ENCODE measurements at regions of chr17 and their contacts with region 1.

Region 1: DNA sequence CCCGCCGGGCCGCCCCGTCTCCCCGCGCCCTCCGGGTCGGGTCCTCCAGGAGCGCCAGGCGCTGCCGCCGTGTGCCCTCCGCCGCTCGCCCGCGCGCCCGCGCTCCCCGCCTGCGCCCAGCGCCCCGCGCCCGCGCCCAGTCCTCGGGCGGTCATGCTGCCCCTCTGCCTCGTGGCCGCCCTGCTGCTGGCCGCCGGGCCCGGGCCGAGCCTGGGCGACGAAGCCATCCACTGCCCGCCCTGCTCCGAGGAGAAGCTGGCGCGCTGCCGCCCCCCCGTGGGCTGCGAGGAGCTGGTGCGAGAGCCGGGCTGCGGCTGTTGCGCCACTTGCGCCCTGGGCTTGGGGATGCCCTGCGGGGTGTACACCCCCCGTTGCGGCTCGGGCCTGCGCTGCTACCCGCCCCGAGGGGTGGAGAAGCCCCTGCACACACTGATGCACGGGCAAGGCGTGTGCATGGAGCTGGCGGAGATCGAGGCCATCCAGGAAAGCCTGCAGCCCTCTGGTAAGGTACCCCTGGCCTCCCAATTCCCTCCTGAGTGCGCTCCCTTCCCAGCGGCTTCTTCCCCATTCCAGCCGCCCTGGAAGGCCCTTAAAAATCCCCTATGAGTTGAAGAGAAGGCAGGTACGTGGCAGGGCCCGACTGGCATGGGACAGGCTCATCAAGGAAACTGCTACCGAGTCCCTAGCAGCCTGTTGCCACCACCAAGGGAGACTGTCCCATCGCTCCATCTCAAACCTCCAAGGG is 505 bp downstream of the IGFBP4 start:
- DNase-seq: peak; percentile 34 to 83 (median 67)
- ATAC-seq: peak; percentile 76
- H3K4me3 ChIP-seq: peak overlapping the region; percentile 42 to 49
- H3K4me3 Mint-ChIP-seq: peak overlapping the region; percentile 85
- H3K27ac ChIP-seq: no peak overlapping the region
- H3K27ac Mint-ChIP-seq: peak overlapping the region; percentile 66
- H3K4me1 ChIP-seq: peaks cover 22% of the 10 kb centered on the region
- H3K4me1 Mint-ChIP-seq: peaks cover 29% of the 10 kb centered on the region
- H3K27me3 ChIP-seq: no peaks in the 10 kb centered on the region
- H3K27me3 Mint-ChIP-seq: peaks cover 3% of the 10 kb centered on the region
- CTCF ChIP-seq: peak; percentile 30

Region 2: DNA sequence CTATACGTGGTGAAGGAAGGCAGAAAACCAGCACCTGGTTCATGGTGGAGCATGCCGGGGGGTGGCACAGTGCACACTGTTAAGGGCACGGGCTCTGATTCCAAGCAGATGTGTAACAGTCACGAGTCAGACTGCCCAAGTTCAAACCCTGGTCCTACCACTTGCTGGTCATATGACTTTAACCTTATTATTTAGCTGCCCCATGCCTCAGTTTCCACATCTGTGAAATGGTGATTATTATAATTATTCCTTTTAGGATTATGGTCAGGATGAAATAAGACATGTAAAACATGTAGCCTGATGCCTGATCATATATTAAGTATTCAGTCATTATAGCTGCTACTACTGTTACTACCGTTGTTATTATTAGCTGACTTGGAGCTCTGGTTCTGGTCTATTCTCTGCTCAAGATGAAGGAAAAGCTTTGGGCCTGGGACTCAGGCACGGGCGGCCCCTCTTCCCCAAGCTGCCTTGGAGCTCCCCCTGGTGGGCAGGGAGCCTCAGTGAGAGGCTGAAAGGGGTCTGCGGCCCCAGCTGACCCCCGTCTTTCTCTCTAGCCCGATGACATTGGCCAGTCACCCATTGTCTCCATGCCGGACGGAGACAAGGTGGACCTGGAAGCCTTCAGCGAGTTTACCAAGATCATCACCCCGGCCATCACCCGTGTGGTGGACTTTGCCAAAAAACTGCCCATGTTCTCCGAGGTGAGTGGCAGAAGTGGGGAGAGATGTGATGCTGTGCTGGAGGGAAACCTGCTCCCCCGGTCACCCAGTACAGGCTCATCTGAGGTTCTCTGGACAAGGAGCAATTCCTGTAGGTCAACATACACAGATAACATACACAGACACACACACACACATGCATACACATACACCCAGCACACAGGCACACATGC is 357.4 kb before region 1 on chr17:
- CTCF ChIA-PET with region 1: no interaction called
- POLR2A ChIA-PET with region 1: no interaction called
- intact Hi-C with region 1: no loop called
- DNase-seq: peak in 8 of 9 experiments; percentile 50 to 77 (median 70)
- ATAC-seq: peak; percentile 70
- H3K4me3 ChIP-seq: no peak overlapping the region
- H3K4me3 Mint-ChIP-seq: no peak overlapping the region
- H3K27ac ChIP-seq: no peak overlapping the region
- H3K27ac Mint-ChIP-seq: no peak overlapping the region
- H3K4me1 ChIP-seq: peaks cover 9% of the 10 kb centered on the region
- H3K4me1 Mint-ChIP-seq: peaks cover 9% of the 10 kb centered on the region
- H3K27me3 ChIP-seq: no peaks in the 10 kb centered on the region
- H3K27me3 Mint-ChIP-seq: no peaks in the 10 kb centered on the region
- CTCF ChIP-seq: peak; percentile 80

Region 3: GRCh38 chr17:40399185-40399584 is 44.6 kb before region 1 on chr17:
- CTCF ChIA-PET with region 1: interaction called, 9 read pairs
- POLR2A ChIA-PET with region 1: no interaction called
- intact Hi-C with region 1: loop called (anchors 1 to 2 kb)
- DNase-seq: peak in 2 of 9 experiments; percentile 71 to 78
- ATAC-seq: peak; percentile 55
- H3K4me3 ChIP-seq: no peak overlapping the region
- H3K4me3 Mint-ChIP-seq: no peak overlapping the region
- H3K27ac ChIP-seq: no peak overlapping the region
- H3K27ac Mint-ChIP-seq: no peak overlapping the region
- H3K4me1 ChIP-seq: no peaks in the 10 kb centered on the region
- H3K4me1 Mint-ChIP-seq: peaks cover 16% of the 10 kb centered on the region
- H3K27me3 ChIP-seq: no peaks in the 10 kb centered on the region
- H3K27me3 Mint-ChIP-seq: no peaks in the 10 kb centered on the region
- CTCF ChIP-seq: peak; percentile 74

Region 4: GRCh38 chr17:40407460-40407859 is 36.3 kb before region 1 on chr17:
- CTCF ChIA-PET with region 1: interaction called, 5 read pairs
- POLR2A ChIA-PET with region 1: no interaction called
- intact Hi-C with region 1: loop called in 1 of 2 experiments (anchors 2 kb)
- DNase-seq: no peak
- ATAC-seq: no peak
- H3K4me3 ChIP-seq: no peak overlapping the region
- H3K4me3 Mint-ChIP-seq: no peak overlapping the region
- H3K27ac ChIP-seq: no peak overlapping the region
- H3K27ac Mint-ChIP-seq: no peak overlapping the region
- H3K4me1 ChIP-seq: no peaks in the 10 kb centered on the region
- H3K4me1 Mint-ChIP-seq: peaks cover 11% of the 10 kb centered on the region
- H3K27me3 ChIP-seq: no peaks in the 10 kb centered on the region
- H3K27me3 Mint-ChIP-seq: no peaks in the 10 kb centered on the region
- CTCF ChIP-seq: no peak

Region 5: GRCh38 chr17:40427002-40427491 is 16.7 kb before region 1 on chr17:
- CTCF ChIA-PET with region 1: interaction called, 10 read pairs
- POLR2A ChIA-PET with region 1: no interaction called
- intact Hi-C with region 1: no loop called
- DNase-seq: peak in 4 of 9 experiments; percentile 14 to 57 (median 44)
- ATAC-seq: peak; percentile 85
- H3K4me3 ChIP-seq: peak overlapping the region in 1 of 2 experiments; percentile 24
- H3K4me3 Mint-ChIP-seq: peak overlapping the region; percentile 31
- H3K27ac ChIP-seq: no peak overlapping the region
- H3K27ac Mint-ChIP-seq: peak overlapping the region; percentile 7
- H3K4me1 ChIP-seq: peaks cover 30% of the 10 kb centered on the region
- H3K4me1 Mint-ChIP-seq: peaks cover 29% of the 10 kb centered on the region
- H3K27me3 ChIP-seq: no peaks in the 10 kb centered on the region
- H3K27me3 Mint-ChIP-seq: no peaks in the 10 kb centered on the region
- CTCF ChIP-seq: no peak

Region 6: GRCh38 chr17:40516581-40517285 is 73.0 kb after region 1 on chr17:
- CTCF ChIA-PET with region 1: interaction called, 5 read pairs
- POLR2A ChIA-PET with region 1: no interaction called
- intact Hi-C with region 1: loop called in 1 of 2 experiments (anchors 5 kb)
- DNase-seq: peak in 8 of 9 experiments; percentile 55 to 93 (median 77)
- ATAC-seq: peak; percentile 69
- H3K4me3 ChIP-seq: peak overlapping the region; percentile 45 to 56
- H3K4me3 Mint-ChIP-seq: peak overlapping the region; percentile 83
- H3K27ac ChIP-seq: peak overlapping the region; percentile 18 to 22
- H3K27ac Mint-ChIP-seq: peak overlapping the region; percentile 95
- H3K4me1 ChIP-seq: peaks cover 46% of the 10 kb centered on the region
- H3K4me1 Mint-ChIP-seq: peaks cover 57% of the 10 kb centered on the region
- H3K27me3 ChIP-seq: no peaks in the 10 kb centered on the region
- H3K27me3 Mint-ChIP-seq: peaks cover 4% of the 10 kb centered on the region
- CTCF ChIP-seq: no peak

Region 7: GRCh38 chr17:40536295-40537171 is 92.8 kb after region 1 on chr17:
- CTCF ChIA-PET with region 1: interaction called, 51 read pairs
- POLR2A ChIA-PET with region 1: interaction called, 6 read pairs
- intact Hi-C with region 1: loop called (anchors 1 kb)
- DNase-seq: peak in 1 of 9 experiments; percentile 38
- ATAC-seq: no peak
- H3K4me3 ChIP-seq: no peak overlapping the region
- H3K4me3 Mint-ChIP-seq: no peak overlapping the region
- H3K27ac ChIP-seq: no peak overlapping the region
- H3K27ac Mint-ChIP-seq: peak overlapping the region; percentile 85
- H3K4me1 ChIP-seq: peaks cover 88% of the 10 kb centered on the region
- H3K4me1 Mint-ChIP-seq: peaks cover 96% of the 10 kb centered on the region
- H3K27me3 ChIP-seq: no peaks in the 10 kb centered on the region
- H3K27me3 Mint-ChIP-seq: no peaks in the 10 kb centered on the region
- CTCF ChIP-seq: no peak

Region 8: DNA sequence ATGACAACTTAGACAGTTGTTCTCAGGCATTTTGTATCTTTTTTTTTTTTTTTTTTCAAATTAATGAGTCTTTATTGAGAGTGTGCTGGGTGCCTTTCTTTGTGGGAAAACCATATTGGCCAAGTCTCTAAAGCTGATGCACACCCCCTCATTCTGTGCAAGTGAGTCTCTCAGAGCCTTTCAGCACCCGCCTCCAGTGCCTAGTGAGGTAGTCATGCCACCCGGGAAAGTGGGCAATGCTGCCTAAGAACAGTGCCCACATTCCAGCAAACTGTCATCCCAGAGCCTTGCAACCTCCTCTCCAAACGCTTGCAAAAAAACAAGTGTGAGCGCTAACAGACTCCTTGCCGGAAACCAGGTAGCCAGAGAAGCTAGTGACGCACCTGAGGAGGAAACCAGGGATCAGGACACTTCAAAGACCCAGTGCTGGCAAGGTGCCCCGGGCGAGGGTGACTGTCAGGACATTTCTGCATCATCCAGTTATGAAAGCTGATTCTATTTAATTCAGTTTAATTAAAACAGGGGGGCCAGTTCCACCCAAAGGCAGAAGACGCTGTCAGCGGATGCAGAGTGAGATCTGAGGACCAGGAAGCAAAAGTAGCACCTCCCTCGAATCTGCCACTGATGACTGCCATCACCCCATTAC is 169.0 kb after region 1 on chr17:
- CTCF ChIA-PET with region 1: no interaction called
- POLR2A ChIA-PET with region 1: no interaction called
- intact Hi-C with region 1: no loop called
- DNase-seq: peak; percentile 59 to 94 (median 81)
- ATAC-seq: peak; percentile 60
- H3K4me3 ChIP-seq: peak overlapping the region; percentile 27 to 61
- H3K4me3 Mint-ChIP-seq: peak overlapping the region; percentile 84
- H3K27ac ChIP-seq: peak overlapping the region; percentile 87 to 92
- H3K27ac Mint-ChIP-seq: peak overlapping the region; percentile 100
- H3K4me1 ChIP-seq: peaks cover 90% of the 10 kb centered on the region
- H3K4me1 Mint-ChIP-seq: peaks cover 87% of the 10 kb centered on the region
- H3K27me3 ChIP-seq: no peaks in the 10 kb centered on the region
- H3K27me3 Mint-ChIP-seq: no peaks in the 10 kb centered on the region
- CTCF ChIP-seq: no peak